MCF 10A (cell line): ENCODE measurements at regions of chr5 and their contacts with region 1.

Region 1: GRCh38 chr5:82351754-82352145 is 73.6 kb upstream of the RPS23 start:
- DNase-seq: peak; percentile 83
- H3K4me3 Mint-ChIP-seq: no peak overlapping the region
- H3K27ac Mint-ChIP-seq: peak overlapping the region; percentile 68
- H3K4me1 Mint-ChIP-seq: peaks cover 38% of the 10 kb centered on the region
- H3K27me3 Mint-ChIP-seq: no peaks in the 10 kb centered on the region
- CTCF ChIP-seq: peak; percentile 46

Region 2: GRCh38 chr5:82335806-82336205 is 15.9 kb before region 1 on chr5:
- CTCF ChIA-PET with region 1: interaction called, 21 read pairs
- POLR2A ChIA-PET with region 1: interaction called, 3 read pairs
- intact Hi-C with region 1: no loop called
- DNase-seq: no peak
- H3K4me3 Mint-ChIP-seq: no peak overlapping the region
- H3K27ac Mint-ChIP-seq: no peak overlapping the region
- H3K4me1 Mint-ChIP-seq: no peaks in the 10 kb centered on the region
- H3K27me3 Mint-ChIP-seq: no peaks in the 10 kb centered on the region
- CTCF ChIP-seq: no peak

Region 3: GRCh38 chr5:82494942-82495341 is 143.2 kb after region 1 on chr5:
- CTCF ChIA-PET with region 1: no interaction called
- POLR2A ChIA-PET with region 1: no interaction called
- intact Hi-C with region 1: loop called (anchors 2 kb)
- DNase-seq: peak; percentile 23
- H3K4me3 Mint-ChIP-seq: no peak overlapping the region
- H3K27ac Mint-ChIP-seq: no peak overlapping the region
- H3K4me1 Mint-ChIP-seq: no peaks in the 10 kb centered on the region
- H3K27me3 Mint-ChIP-seq: no peaks in the 10 kb centered on the region
- CTCF ChIP-seq: peak; percentile 21

Region 4: DNA sequence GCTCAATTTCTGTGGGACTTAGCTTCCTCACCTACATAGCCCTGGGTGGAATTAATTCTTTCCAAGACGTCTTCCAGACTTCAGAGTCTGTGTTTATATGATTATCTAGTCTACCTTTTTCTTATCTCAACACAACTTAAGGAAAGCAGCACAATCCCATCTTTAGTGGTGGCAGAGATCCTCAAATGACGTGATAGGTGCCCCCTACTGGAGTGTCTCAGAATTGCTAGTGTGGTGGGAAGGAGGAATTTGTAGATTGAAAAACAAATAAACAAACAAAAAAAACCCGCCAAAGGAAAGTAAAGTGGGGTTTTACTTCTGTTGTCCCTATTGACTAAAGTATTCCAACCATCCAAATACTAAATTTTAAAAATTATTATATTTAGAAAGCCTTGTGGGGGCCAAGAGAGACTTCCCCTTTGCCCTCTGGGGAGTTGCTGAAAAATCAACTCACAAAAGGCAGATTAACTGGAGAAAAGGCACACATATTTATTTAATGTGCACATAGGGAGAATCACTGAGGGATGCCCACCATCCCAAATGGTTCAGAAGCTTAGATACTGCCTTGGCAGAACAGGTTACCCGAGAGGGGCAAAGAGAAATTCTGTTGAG is 442.2 kb after region 1 on chr5:
- CTCF ChIA-PET with region 1: interaction called, 3 read pairs
- POLR2A ChIA-PET with region 1: no interaction called
- intact Hi-C with region 1: loop called (anchors 5 kb)
- DNase-seq: peak; percentile 60
- H3K4me3 Mint-ChIP-seq: no peak overlapping the region
- H3K27ac Mint-ChIP-seq: no peak overlapping the region
- H3K4me1 Mint-ChIP-seq: no peaks in the 10 kb centered on the region
- H3K27me3 Mint-ChIP-seq: no peaks in the 10 kb centered on the region
- CTCF ChIP-seq: peak; percentile 68

Region 5: DNA sequence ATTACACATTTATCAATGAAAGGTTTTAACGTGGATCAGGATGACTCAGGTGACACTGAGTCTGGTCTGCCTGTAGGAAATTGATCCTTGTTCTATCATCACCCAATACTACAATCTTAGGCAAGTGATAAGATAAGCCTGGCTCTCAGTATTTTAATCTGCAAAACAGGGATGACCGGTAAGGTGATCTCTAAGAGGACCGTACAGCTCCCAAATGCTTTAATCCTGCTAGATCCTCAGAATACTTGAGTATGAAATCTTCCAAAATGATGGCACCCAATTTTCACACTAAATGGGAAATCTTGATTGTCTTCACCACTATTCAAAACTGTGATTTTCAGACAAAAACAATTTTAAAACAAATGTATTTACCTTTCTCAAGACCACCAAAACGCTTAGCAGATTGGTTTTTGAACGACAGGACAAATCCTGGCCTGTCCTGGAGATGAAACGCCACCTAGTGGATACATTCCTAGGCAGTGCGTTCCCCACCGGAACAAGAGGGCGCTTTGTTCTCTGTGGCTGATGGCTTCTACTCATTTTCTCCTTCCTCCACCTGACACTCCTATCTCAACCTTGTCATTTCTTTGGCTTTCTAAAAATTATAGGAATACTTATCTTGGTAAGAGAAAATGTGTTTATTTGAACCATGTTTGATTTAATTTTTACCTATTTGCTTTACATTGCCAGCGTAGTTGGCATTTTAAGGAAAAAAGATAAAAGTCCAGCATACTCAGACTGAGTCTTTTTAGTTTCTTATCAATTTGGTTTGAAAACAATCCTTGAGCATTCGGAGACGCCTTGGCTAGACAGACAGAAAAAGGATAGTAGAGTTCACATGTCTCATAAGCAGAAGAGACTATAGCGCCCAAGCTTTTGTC is 1078.6 kb after region 1 on chr5:
- CTCF ChIA-PET with region 1: interaction called, 5 read pairs
- POLR2A ChIA-PET with region 1: no interaction called
- intact Hi-C with region 1: loop called (anchors 1 kb)
- DNase-seq: peak; percentile 72
- H3K4me3 Mint-ChIP-seq: no peak overlapping the region
- H3K27ac Mint-ChIP-seq: no peak overlapping the region
- H3K4me1 Mint-ChIP-seq: no peaks in the 10 kb centered on the region
- H3K27me3 Mint-ChIP-seq: no peaks in the 10 kb centered on the region
- CTCF ChIP-seq: peak; percentile 78

Region 6: DNA sequence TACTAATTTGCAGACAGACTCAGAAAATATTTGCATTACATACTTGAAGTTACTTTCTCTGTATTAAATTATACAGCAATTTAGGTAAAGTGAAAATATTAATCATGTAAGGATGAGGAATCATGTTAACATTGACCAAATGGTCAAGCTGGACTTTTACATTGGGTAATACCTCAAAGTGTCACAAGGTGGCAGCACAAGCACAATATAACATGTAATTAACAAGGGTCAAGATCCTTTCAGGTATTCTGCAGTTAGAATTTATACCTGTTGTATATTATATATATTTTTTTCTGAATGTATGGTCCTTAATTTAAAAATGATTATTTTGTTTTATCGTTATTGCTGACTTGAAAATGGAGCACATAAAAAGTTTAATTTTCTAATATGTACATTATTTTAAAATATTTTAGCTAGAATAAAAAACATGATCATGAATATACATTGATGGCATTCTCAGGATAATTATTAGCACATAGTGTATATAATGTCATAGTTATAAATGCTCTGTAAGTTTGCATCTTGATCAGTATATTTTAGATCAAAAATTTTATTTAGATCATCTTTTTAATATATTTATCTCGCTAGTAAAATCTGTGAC is 1360.4 kb after region 1 on chr5:
- CTCF ChIA-PET with region 1: no interaction called
- POLR2A ChIA-PET with region 1: no interaction called
- intact Hi-C with region 1: loop called (anchors 5 kb)
- DNase-seq: peak; percentile 68
- H3K4me3 Mint-ChIP-seq: no peak overlapping the region
- H3K27ac Mint-ChIP-seq: no peak overlapping the region
- H3K4me1 Mint-ChIP-seq: no peaks in the 10 kb centered on the region
- H3K27me3 Mint-ChIP-seq: peaks cover 85% of the 10 kb centered on the region
- CTCF ChIP-seq: peak; percentile 71